Heart right ventricle (tissue), 16 donors: ENCODE measurements at regions of chr21 and their contacts with region 1.

Region 1: DNA sequence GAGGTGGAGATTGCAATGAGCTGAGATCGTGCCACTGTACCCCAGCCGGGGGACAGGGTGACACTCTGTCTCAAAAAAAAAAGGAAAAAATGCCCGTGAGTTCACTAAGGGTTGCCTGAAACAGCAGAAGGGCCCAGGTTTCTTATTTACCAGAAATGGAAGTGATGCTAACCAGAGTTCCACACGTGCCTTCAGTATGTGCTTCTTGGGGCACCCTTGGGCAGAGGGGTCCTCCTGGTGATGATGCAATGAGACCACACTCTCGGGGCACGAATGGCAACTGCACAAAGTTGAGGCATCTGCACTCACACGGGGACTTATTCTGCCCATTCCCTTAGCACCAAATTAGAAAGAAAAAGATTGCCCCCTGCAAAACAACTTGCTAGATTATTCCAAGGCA is 29.2 kb downstream of the OLIG1 start:
- DNase-seq: no peak
- ATAC-seq: no peak
- H3K4me3 ChIP-seq: no peak overlapping the region
- H3K27ac ChIP-seq: no peak overlapping the region
- H3K4me1 ChIP-seq: no peaks in the 10 kb centered on the region
- H3K27me3 ChIP-seq: peaks cover 0 to 69% (median 34%) of the 10 kb centered on the region in 7 donors
- CTCF ChIP-seq: no peak

Region 2: DNA sequence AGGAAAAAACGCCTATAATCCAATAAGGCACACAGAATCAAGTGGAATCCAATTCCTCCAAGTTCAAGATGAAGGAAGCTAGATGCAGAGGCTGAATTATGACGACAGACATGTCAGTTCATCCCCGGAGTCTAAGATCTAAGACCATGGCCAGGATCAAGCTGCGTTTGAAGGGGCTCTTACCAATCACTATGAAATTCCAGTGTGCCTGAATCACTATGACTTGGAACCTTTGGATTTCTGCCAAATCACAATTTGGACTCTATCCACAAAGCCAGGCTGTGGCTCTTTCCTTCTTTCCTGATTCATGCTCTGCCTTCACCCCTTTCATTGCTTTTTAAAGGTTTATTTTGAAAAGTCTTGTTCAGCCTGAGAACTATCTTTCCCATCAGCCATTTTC is 56.3 kb before region 1 on chr21:
- intact Hi-C with region 1: loop called in 1 of 10 experiments (anchors 2 kb)
- DNase-seq: no peak
- ATAC-seq: no peak
- H3K4me3 ChIP-seq: no peak overlapping the region
- H3K27ac ChIP-seq: no peak overlapping the region
- H3K4me1 ChIP-seq: peaks cover 0 to 6% (median 0%) of the 10 kb centered on the region in 9 donors
- H3K27me3 ChIP-seq: peaks cover 0 to 90% (median 72%) of the 10 kb centered on the region in 7 donors
- CTCF ChIP-seq: no peak

Region 3: GRCh38 chr21:33324291-33325221 is 225.4 kb after region 1 on chr21 and contains the start of gene IFNAR1:
- intact Hi-C with region 1: no loop called
- DNase-seq: peak; percentile 98 to 99
- ATAC-seq: peak; percentile 98 to 100 (median 99)
- H3K4me3 ChIP-seq: peak within 1 kb of the TSS; percentile 67 to 99 (median 93)
- H3K27ac ChIP-seq: peak within 1 kb of the TSS; percentile 92 to 100 (median 99)
- H3K4me1 ChIP-seq: peaks cover 2 to 49% (median 36%) of the 10 kb centered on the region in 9 donors
- H3K27me3 ChIP-seq: no peaks in the 10 kb centered on the region
- CTCF ChIP-seq: no peak
- total RNA-seq, gene IFNAR1: 16.5 to 38.5 (median 23.9) TPM